ENCODE measurements at regions of chr4 and their contacts with region 1.

Region 1: GRCh38 chr4:182938205-182938645 is 21.0 kb upstream of the DCTD start:
- DNase-seq: peak; percentile 31
- H3K4me3 Mint-ChIP-seq: no peak overlapping the region
- H3K27ac Mint-ChIP-seq: no peak overlapping the region
- H3K4me1 Mint-ChIP-seq: no peaks in the 10 kb centered on the region
- H3K27me3 Mint-ChIP-seq: peaks cover 14% of the 10 kb centered on the region

Region 2: GRCh38 chr4:183256756-183257385 is 318.6 kb after region 1 on chr4:
- intact Hi-C with region 1: loop called (anchors 1 kb)
- DNase-seq: no peak
- H3K4me3 Mint-ChIP-seq: no peak overlapping the region
- H3K27ac Mint-ChIP-seq: no peak overlapping the region
- H3K4me1 Mint-ChIP-seq: no peaks in the 10 kb centered on the region
- H3K27me3 Mint-ChIP-seq: peaks cover 6% of the 10 kb centered on the region

Measured in activated T-helper 1 cell treated with anti-CD3 and anti-CD28 coated beads, Interleukin-12 subunit alpha, Interleukin-12 subunit beta, Interleukin-2, Interleukin-4 antibody, amounts not matched to agents 30 ng/mL and 10 ng/mL and 1 ng/mL, durations not matched to agents 14 hours and 24 hours and 36 hours (primary cell).